OCI-LY7 (cell line): ENCODE measurements at regions of chr1 and their contacts with region 1.

Region 1: DNA sequence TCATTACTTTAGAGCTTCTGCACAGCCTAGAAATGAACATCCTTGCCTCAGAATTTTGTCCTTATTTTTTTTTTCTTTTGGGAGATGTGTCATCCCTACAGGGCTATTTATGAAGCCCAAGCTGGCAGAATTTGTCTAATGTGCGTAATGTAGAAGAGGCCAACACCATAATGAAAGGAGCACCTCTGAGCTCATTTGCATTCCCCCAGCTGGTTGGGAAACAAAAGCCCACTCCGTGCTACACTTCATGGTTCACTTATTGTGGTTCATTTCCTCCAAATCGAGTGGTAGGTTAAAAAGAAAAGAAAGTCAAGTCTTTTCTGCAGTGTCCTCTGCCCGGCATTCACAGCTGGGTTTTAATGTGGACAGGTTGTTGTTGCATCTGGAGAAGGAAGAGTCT is 73.5 kb downstream of the KAZN start:
- DNase-seq: peak; percentile 93
- H3K4me3 ChIP-seq: peak overlapping the region; percentile 57
- H3K27ac ChIP-seq: peak overlapping the region; percentile 96
- H3K4me1 ChIP-seq: peaks cover 89% of the 10 kb centered on the region
- CTCF ChIP-seq: no peak

Region 2: GRCh38 chr1:13892671-13893325 is 779.2 kb before region 1 on chr1:
- CTCF ChIA-PET with region 1: no interaction called
- POLR2A ChIA-PET with region 1: no interaction called
- intact Hi-C with region 1: no loop called
- DNase-seq: no peak
- H3K4me3 ChIP-seq: no peak overlapping the region
- H3K27ac ChIP-seq: no peak overlapping the region
- H3K4me1 ChIP-seq: no peaks in the 10 kb centered on the region
- CTCF ChIP-seq: no peak

Region 3: DNA sequence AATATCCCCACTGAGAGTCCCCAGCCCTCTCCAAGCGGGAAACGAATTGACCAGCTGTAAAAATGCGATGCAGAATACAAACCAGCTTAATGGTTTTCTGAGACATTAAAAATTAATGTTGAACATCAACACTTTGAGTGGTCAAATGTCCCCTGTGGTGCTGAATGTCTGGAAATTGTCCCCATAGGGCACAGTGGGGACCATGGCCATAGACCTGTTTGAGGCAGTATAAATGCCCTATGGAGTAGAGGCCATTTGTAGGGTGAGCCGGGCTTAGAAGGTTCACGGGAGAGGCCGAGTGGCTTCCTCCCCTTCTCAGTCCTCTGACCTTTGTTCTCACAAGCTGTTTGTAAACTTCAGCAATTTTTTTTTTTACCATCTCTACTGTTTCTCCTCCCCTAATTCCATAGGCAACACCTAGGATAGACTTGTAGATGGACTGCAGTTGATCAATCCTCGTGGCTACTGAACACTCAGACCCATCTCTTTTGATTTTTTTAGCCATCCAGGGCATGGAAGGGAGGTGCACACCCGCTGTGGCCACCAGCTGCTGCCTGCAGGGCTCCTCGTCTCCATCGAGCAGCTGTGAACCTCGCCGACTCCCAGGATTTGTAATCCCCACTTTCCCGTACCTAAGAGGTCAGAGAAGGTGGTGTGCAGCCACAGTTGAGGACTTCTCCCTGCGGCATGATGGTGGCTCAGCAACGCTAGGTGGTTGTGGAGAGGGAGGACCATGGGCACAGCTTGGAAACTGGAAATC is 32.5 kb before region 1 on chr1:
- CTCF ChIA-PET with region 1: no interaction called
- POLR2A ChIA-PET with region 1: no interaction called
- intact Hi-C with region 1: no loop called
- DNase-seq: no peak
- H3K4me3 ChIP-seq: no peak overlapping the region
- H3K27ac ChIP-seq: no peak overlapping the region
- H3K4me1 ChIP-seq: no peaks in the 10 kb centered on the region
- CTCF ChIP-seq: no peak

Region 4: DNA sequence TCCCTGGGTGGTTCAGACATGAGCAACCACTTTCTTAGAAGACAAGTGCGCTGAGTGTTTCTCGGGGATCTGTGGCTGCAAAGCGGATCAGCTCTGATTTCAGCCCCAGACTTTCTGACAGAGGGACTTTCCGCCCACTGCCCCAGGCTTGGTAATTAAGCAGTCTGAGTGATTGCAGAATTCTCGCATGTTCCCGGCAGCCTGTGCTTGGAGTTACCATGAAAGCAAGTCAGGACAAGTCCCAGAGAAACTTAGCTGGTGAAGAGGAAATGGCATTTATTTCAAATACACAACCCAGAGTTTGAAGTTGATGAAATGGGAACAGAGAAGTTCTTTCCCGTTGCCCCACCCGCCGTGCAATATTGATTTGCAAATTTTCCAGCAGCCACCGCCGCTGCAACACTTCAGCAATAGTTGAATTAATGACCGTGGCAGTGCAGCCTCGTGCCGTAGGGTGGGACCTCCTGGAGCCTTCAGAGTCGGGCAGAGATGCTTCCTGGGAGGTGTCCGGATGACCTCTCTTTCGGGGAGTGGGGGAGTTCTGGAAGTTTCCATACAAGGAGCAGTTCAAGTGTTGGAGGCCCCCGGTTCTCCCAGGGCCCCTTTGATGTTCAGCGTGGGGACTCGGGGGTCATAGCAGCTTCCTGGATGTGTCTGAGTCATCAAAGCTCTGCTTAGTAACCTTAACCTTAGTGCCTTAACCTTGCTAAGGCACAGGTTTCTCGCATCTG is 61.2 kb after region 1 on chr1:
- CTCF ChIA-PET with region 1: no interaction called
- POLR2A ChIA-PET with region 1: interaction called, 9 read pairs
- intact Hi-C with region 1: loop called (anchors 1 kb)
- DNase-seq: peak; percentile 61
- H3K4me3 ChIP-seq: peak overlapping the region; percentile 93
- H3K27ac ChIP-seq: peak overlapping the region; percentile 98
- H3K4me1 ChIP-seq: peaks cover 50% of the 10 kb centered on the region
- CTCF ChIP-seq: no peak